ENCODE measurements at regions of chr17 and their contacts with region 1.

Region 1: DNA sequence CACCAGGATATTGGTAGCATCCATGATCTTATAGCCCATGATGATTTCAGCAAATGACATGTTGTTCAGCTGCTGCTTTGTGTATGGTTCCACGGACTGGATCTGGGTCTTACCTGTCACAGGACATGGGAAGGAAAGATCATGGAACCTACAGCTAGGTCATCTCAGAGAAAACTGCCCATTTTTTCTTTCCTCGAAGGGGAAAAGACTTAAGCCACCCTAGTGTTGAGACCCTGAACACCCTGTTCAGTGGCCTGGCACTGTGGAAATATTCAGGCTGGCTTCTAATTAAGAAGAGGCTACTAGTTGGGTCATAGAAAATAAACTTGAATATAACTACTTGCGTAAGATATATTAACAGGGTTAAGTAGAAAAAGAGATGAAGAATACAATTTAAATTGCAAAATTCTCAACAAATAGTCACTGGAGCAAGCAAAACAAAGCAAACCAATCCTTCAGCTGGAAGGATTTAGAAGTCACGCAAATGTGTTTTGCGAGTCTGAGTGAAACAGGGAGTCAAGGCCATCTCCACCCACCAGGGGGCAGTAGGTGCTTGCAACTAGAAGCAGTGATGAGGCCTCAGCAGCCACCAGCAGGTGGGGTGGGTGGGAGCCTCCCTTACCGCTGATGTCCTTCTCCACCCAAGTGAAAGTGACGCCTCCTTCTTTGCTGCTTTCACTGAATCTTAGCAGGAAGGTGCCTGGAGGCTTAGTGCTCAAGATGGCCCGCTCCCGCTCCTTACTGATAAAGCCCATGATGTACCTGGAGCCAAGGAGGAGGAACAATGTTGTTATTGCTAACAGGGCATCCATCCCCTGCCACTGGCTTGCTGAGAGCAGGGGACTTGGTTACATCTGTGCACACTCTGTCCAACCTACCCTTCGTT is 34.3 kb downstream of the STAT5A start:
- DNase-seq: peak; percentile 85
- ATAC-seq: peak; percentile 86
- H3K4me3 ChIP-seq: no peak overlapping the region
- H3K27ac ChIP-seq: no peak overlapping the region
- H3K4me1 ChIP-seq: peaks cover 18 to 38% of the 10 kb centered on the region in 2 experiments
- H3K27me3 ChIP-seq: no peaks in the 10 kb centered on the region
- CTCF ChIP-seq: peak; percentile 99 to 100 (median 100)
- POLR2A ChIP-seq: no peak
- RAD21 ChIP-seq: peak; percentile 99

Region 2: DNA sequence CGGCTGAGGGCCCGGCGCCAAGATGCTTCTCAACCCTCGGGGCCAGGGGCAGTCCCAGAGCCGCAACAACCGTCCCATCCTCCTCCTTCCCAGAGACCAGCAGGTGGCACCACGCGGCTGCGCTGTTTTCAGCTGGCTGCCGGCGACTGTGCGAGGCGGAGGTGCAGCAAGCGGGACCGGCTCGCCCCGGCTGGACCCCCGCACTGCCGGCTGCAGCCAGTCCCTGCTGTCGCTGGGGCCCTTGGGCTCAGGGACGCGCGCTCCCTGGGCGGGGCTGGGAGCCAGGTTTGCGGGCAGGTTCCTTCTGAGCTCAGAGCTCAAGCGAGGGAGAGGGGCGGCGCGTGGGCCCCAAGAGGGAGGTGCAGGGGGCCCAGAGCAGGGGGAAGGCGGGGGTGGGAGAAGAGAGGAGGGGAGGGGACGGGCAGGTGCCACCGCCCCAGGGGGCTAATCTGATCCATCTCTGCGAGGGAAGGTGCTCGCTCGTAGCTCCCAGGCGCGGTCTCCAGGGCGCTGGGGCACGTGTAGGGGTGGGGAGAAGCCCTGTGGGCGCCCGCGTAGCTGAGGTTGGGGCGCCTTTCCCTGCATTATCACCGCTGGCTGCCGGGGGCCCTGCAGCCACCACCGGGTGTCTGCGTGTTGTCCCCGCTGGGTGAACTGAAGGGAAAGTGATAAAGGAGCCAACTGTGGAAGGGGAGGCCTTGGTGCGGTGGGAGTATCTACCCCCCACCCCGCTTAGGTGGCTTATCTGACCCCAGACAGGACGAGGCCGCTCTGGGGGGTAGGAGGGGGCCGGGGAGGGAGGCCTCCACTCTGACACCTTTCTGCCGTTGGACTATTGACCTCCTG is 10.1 kb before region 1 on chr17:
- CTCF ChIA-PET with region 1: no interaction called
- POLR2A ChIA-PET with region 1: no interaction called
- RAD21 ChIA-PET with region 1: no interaction called
- intact Hi-C with region 1: no loop called
- DNase-seq: no peak
- ATAC-seq: peak; percentile 75
- H3K4me3 ChIP-seq: no peak overlapping the region
- H3K27ac ChIP-seq: no peak overlapping the region
- H3K4me1 ChIP-seq: no peaks in the 10 kb centered on the region
- H3K27me3 ChIP-seq: no peaks in the 10 kb centered on the region
- CTCF ChIP-seq: peak; percentile 25 to 34 (median 27); a peak in 4 of 6 replicates
- POLR2A ChIP-seq: no peak
- RAD21 ChIP-seq: peak; percentile 48; the same call in 1 of the 2 replicates

Region 3: DNA sequence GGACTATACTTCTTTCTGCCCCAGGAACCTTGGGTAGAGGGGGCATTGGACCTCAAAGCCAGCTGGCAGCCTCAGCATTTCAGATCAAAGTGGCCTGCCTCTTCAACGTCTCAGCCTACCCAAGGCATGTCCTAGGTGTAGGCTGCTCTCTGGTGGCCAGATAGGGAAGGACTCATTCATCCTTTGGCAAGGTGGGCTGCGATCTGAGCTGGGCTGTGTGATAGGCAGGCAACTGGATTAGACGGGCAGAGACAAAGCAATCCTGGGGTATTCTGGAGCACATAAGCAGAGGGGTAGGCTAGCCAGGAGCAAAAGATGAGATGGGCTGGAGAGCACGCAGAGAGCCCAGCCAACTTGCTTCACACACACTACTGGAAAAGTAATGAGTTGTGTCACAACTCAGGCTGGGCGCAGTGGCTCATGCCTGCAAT is 204.7 kb after region 1 on chr17:
- CTCF ChIA-PET with region 1: interaction called, 33 read pairs
- POLR2A ChIA-PET with region 1: interaction called, 3 read pairs
- RAD21 ChIA-PET with region 1: no interaction called
- intact Hi-C with region 1: loop called (anchors 1 kb)
- DNase-seq: peak; percentile 69
- ATAC-seq: peak; percentile 92
- H3K4me3 ChIP-seq: no peak overlapping the region
- H3K27ac ChIP-seq: no peak overlapping the region
- H3K4me1 ChIP-seq: peaks cover 27 to 66% of the 10 kb centered on the region in 2 experiments
- H3K27me3 ChIP-seq: no peaks in the 10 kb centered on the region
- CTCF ChIP-seq: peak; percentile 86 to 95 (median 91)
- POLR2A ChIP-seq: no peak
- RAD21 ChIP-seq: peak; percentile 97